ENCODE measurements at regions of chr14 and their contacts with region 1.

Region 1: GRCh38 chr14:89013084-89013504 is 188.6 kb downstream of the TTC8 start:
- DNase-seq: peak in 3 of 14 experiments; percentile 5 to 23 (median 10)
- ATAC-seq: no peak
- H3K4me3 ChIP-seq: no peak overlapping the region
- H3K4me3 Mint-ChIP-seq: no peak overlapping the region
- H3K27ac ChIP-seq: no peak overlapping the region
- H3K27ac Mint-ChIP-seq: no peak overlapping the region
- H3K4me1 ChIP-seq: no peaks in the 10 kb centered on the region
- H3K4me1 Mint-ChIP-seq: no peaks in the 10 kb centered on the region
- H3K27me3 ChIP-seq: peaks cover 0 to 4% of the 10 kb centered on the region in 2 experiments
- H3K27me3 Mint-ChIP-seq: peaks cover 35% of the 10 kb centered on the region
- CTCF ChIP-seq: no peak

Region 2: GRCh38 chr14:88492272-88493089 is 520.6 kb before region 1 on chr14:
- CTCF ChIA-PET with region 1: no interaction called
- POLR2A ChIA-PET with region 1: interaction called, 3 read pairs
- intact Hi-C with region 1: loop called in 1 of 2 experiments (anchors 5 kb)
- DNase-seq: peak; percentile 22 to 80 (median 47)
- ATAC-seq: peak; percentile 72
- H3K4me3 ChIP-seq: no peak overlapping the region
- H3K4me3 Mint-ChIP-seq: no peak overlapping the region
- H3K27ac ChIP-seq: no peak overlapping the region
- H3K27ac Mint-ChIP-seq: no peak overlapping the region
- H3K4me1 ChIP-seq: no peaks in the 10 kb centered on the region
- H3K4me1 Mint-ChIP-seq: no peaks in the 10 kb centered on the region
- H3K27me3 ChIP-seq: no peaks in the 10 kb centered on the region
- H3K27me3 Mint-ChIP-seq: peaks cover 5% of the 10 kb centered on the region
- CTCF ChIP-seq: peak; percentile 85

Region 3: DNA sequence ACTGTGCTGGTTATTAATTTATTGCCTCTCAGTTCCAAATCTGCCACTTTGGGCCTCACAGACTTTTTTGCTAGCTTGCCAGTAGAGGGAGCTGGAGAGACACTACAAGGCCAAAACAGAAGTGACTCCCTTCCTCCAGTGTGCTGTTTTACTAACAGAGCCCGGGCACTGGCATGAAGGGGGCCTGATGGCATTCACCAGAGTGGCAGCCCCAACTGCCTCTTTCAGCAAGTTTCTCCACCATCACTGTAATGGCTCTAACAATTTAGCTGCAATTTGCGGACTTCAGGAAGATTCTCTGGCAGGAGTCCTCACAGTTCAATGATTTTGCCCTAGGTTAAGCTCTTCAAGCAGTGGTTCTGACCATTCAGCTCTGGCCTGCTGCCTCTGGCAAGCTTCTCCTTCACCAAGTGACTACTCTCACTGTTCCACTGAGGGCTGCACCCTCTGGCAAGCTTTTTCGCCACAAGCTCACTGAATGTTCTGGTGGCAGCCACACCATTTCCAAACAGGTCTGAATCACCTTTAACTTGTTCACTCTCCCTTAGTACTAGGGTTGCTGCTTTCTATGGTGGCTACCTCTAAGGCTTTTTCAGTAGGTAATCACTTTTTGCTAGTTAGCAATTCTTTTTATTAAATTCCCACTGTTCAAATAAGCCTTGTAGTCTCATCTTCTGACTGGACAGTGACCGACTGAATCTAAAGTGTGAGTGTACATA is 345.4 kb before region 1 on chr14:
- CTCF ChIA-PET with region 1: no interaction called
- POLR2A ChIA-PET with region 1: no interaction called
- intact Hi-C with region 1: loop called in 1 of 2 experiments (anchors 10 kb)
- DNase-seq: peak in 13 of 14 experiments; percentile 2 to 79 (median 32)
- ATAC-seq: peak; percentile 65
- H3K4me3 ChIP-seq: no peak overlapping the region
- H3K4me3 Mint-ChIP-seq: no peak overlapping the region
- H3K27ac ChIP-seq: no peak overlapping the region
- H3K27ac Mint-ChIP-seq: no peak overlapping the region
- H3K4me1 ChIP-seq: peaks cover 4% of the 10 kb centered on the region
- H3K4me1 Mint-ChIP-seq: no peaks in the 10 kb centered on the region
- H3K27me3 ChIP-seq: no peaks in the 10 kb centered on the region
- H3K27me3 Mint-ChIP-seq: no peaks in the 10 kb centered on the region
- CTCF ChIP-seq: peak; percentile 81

Region 4: GRCh38 chr14:89033756-89034155 is 20.7 kb after region 1 on chr14:
- CTCF ChIA-PET with region 1: no interaction called
- POLR2A ChIA-PET with region 1: no interaction called
- intact Hi-C with region 1: no loop called
- DNase-seq: no peak
- ATAC-seq: no peak
- H3K4me3 ChIP-seq: no peak overlapping the region
- H3K4me3 Mint-ChIP-seq: no peak overlapping the region
- H3K27ac ChIP-seq: no peak overlapping the region
- H3K27ac Mint-ChIP-seq: no peak overlapping the region
- H3K4me1 ChIP-seq: no peaks in the 10 kb centered on the region
- H3K4me1 Mint-ChIP-seq: no peaks in the 10 kb centered on the region
- H3K27me3 ChIP-seq: peaks cover 3 to 10% of the 10 kb centered on the region in 2 experiments
- H3K27me3 Mint-ChIP-seq: peaks cover 68% of the 10 kb centered on the region
- CTCF ChIP-seq: no peak

Measured in CD4-positive, alpha-beta T cell (primary cell).